ENCODE measurements at regions of chr9 and their contacts with region 1.

Region 1: DNA sequence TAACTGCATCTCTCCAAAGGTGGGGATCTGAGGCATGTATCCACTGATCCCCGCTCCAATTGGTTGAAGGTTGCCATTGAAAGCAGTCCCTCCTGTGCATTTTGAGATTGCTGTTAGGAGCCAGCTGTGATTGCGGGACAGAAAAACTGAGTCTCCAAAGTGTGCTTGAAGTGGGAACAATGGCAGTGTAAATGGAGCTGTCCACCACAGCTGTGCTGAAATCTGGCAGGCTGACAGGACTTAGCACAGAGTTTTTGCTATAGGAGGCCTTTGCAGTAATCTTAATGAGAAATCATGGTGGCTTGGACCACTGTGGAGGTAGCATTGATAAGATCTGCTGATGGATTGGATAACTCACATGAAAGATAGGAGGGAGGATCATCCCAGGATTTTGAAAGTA is 3.3 kb downstream of the RNF20 start:
- DNase-seq: peak; percentile 50
- H3K4me3 Mint-ChIP-seq: no peak overlapping the region
- H3K27ac Mint-ChIP-seq: no peak overlapping the region
- H3K4me1 Mint-ChIP-seq: peaks cover 20% of the 10 kb centered on the region
- H3K27me3 Mint-ChIP-seq: no peaks in the 10 kb centered on the region

Region 2: GRCh38 chr9:101449140-101449721 is 87.7 kb before region 1 on chr9:
- CTCF ChIA-PET with region 1: interaction called, 13 read pairs
- POLR2A ChIA-PET with region 1: no interaction called
- intact Hi-C with region 1: no loop called
- DNase-seq: peak; percentile 65
- H3K4me3 Mint-ChIP-seq: peak overlapping the region; percentile 57
- H3K27ac Mint-ChIP-seq: no peak overlapping the region
- H3K4me1 Mint-ChIP-seq: peaks cover 13% of the 10 kb centered on the region
- H3K27me3 Mint-ChIP-seq: peaks cover 41% of the 10 kb centered on the region